H1 (cell line): ENCODE measurements at regions of chr4 and their contacts with region 1.

Region 1: GRCh38 chr4:77203380-77204197 is 46.6 kb downstream of the CCNG2 start:
- DNase-seq: peak; percentile 59 to 72
- H3K4me3 ChIP-seq: no peak overlapping the region
- H3K27ac ChIP-seq: no peak overlapping the region
- H3K4me1 ChIP-seq: peaks cover 0 to 4% (median 0%) of the 10 kb centered on the region in 4 experiments; a peak in 1 of 7 replicates
- H3K27me3 ChIP-seq: peaks cover 0 to 2% (median 0%) of the 10 kb centered on the region in 4 experiments; a peak in 1 of 7 replicates
- CTCF ChIP-seq: peak; percentile 35 to 93 (median 88)
- EP300 ChIP-seq: no peak
- POLR2A ChIP-seq: no peak
- RAD21 ChIP-seq: peak; percentile 96 to 98

Region 2: DNA sequence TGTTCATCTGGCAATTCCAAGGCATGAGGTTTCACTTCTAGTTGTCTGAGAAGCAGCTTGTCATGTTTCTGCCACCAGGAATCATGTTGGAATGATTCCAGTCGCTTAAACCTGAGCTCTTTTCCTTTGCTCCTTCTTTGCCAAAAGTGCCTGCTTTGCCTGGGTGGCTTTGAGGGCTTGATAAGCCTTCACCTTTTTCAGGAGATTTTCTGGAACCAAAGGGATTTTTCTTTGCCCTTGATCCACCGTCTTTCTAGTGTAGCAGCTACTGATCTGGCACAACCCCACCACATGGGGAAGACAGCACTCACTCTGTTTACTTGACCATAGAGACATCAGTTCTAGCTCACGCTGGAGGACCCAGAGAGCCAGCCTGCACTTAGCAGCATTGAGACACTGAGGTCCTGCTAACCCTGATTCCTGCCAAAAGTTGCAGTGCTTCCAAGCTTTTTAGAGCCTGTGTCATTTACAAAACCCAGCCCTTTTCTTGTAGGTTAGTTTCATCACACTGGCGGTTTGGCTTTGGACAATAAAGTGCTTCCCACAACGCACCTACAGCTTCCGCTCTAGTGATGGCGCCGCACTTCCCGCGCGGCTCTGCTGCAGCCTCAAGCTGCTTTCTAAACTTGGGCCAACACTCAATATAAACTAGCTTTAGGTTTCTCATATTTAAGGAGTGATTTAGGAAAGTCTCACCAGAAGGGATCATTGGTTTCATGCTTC is 120.5 kb before region 1 on chr4:
- CTCF ChIA-PET with region 1: interaction called, 13 read pairs
- POLR2A ChIA-PET with region 1: no interaction called
- DNase-seq: no peak
- H3K4me3 ChIP-seq: no peak overlapping the region
- H3K27ac ChIP-seq: no peak overlapping the region
- H3K4me1 ChIP-seq: no peaks in the 10 kb centered on the region
- H3K27me3 ChIP-seq: no peaks in the 10 kb centered on the region
- CTCF ChIP-seq: peak; percentile 16 to 38 (median 25); a peak in 3 of 4 replicates
- EP300 ChIP-seq: no peak
- POLR2A ChIP-seq: no peak
- RAD21 ChIP-seq: no peak

Region 3: GRCh38 chr4:77104791-77105540 is 98.6 kb before region 1 on chr4:
- CTCF ChIA-PET with region 1: interaction called, 13 read pairs
- POLR2A ChIA-PET with region 1: no interaction called
- DNase-seq: no peak
- H3K4me3 ChIP-seq: no peak overlapping the region; a peak in 1 of 8 replicates
- H3K27ac ChIP-seq: no peak overlapping the region
- H3K4me1 ChIP-seq: no peaks in the 10 kb centered on the region
- H3K27me3 ChIP-seq: no peaks in the 10 kb centered on the region
- CTCF ChIP-seq: no peak
- EP300 ChIP-seq: no peak
- POLR2A ChIP-seq: no peak
- RAD21 ChIP-seq: no peak

Region 4: GRCh38 chr4:77156533-77156911 is 47.1 kb before region 1 on chr4:
- CTCF ChIA-PET with region 1: interaction called, 12 read pairs
- POLR2A ChIA-PET with region 1: interaction called, 4 read pairs
- DNase-seq: peak; percentile 89 to 99
- H3K4me3 ChIP-seq: peak overlapping the region; percentile 76 to 94 (median 92)
- H3K27ac ChIP-seq: peak overlapping the region; percentile 100
- H3K4me1 ChIP-seq: peaks cover 0 to 6% (median 2%) of the 10 kb centered on the region in 4 experiments; a peak in 4 of 7 replicates
- H3K27me3 ChIP-seq: no peaks in the 10 kb centered on the region
- CTCF ChIP-seq: no peak
- EP300 ChIP-seq: no peak
- POLR2A ChIP-seq: no peak; a peak in 1 of 3 replicates
- RAD21 ChIP-seq: no peak

Region 5: GRCh38 chr4:77172336-77172735 is 31.3 kb before region 1 on chr4:
- CTCF ChIA-PET with region 1: interaction called, 59 read pairs
- POLR2A ChIA-PET with region 1: no interaction called
- DNase-seq: no peak
- H3K4me3 ChIP-seq: no peak overlapping the region
- H3K27ac ChIP-seq: no peak overlapping the region
- H3K4me1 ChIP-seq: peaks cover 0 to 3% (median under 1%) of the 10 kb centered on the region in 4 experiments; a peak in 4 of 7 replicates
- H3K27me3 ChIP-seq: peaks cover 12 to 25% (median 20%) of the 10 kb centered on the region in 4 experiments
- CTCF ChIP-seq: no peak
- EP300 ChIP-seq: no peak
- POLR2A ChIP-seq: no peak
- RAD21 ChIP-seq: no peak

Region 6: DNA sequence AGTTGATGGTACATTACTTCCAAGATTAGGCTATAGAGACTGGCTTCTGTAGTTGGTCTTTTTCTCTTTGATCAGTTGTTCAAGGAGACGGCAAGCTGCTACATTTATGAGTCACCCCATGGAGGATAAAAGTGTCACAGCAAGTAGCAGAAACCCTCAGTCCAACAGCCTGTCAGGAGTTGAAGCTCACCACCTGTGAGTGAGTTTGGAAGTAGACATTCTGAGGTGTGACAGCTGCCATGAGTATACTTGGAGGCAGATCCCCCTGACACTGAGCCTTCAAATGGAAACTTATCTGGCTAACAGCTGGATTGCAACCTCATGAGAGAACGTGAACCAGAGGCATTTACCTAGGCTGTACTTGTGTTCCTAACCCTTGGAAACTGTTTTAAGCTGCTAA is 21.4 kb after region 1 on chr4:
- CTCF ChIA-PET with region 1: interaction called, 23 read pairs
- POLR2A ChIA-PET with region 1: no interaction called
- DNase-seq: no peak
- H3K4me3 ChIP-seq: no peak overlapping the region
- H3K27ac ChIP-seq: no peak overlapping the region
- H3K4me1 ChIP-seq: no peaks in the 10 kb centered on the region
- H3K27me3 ChIP-seq: no peaks in the 10 kb centered on the region; a peak in 1 of 7 replicates
- CTCF ChIP-seq: no peak
- EP300 ChIP-seq: no peak
- POLR2A ChIP-seq: no peak
- RAD21 ChIP-seq: no peak

Region 7: GRCh38 chr4:77251751-77252150 is 48.2 kb after region 1 on chr4:
- CTCF ChIA-PET with region 1: no interaction called
- POLR2A ChIA-PET with region 1: no interaction called
- DNase-seq: no peak
- H3K4me3 ChIP-seq: no peak overlapping the region
- H3K27ac ChIP-seq: no peak overlapping the region
- H3K4me1 ChIP-seq: no peaks in the 10 kb centered on the region
- H3K27me3 ChIP-seq: peaks cover 0 to 1% (median 0%) of the 10 kb centered on the region in 4 experiments; a peak in 1 of 7 replicates
- CTCF ChIP-seq: no peak
- EP300 ChIP-seq: no peak
- POLR2A ChIP-seq: no peak
- RAD21 ChIP-seq: no peak